PC-3 (cell line): ENCODE measurements at regions of chr7 and their contacts with region 1.

Region 1: GRCh38 chr7:7732566-7733290 is 14.3 kb upstream of the RPA3 start:
- DNase-seq: peak; percentile 42
- ATAC-seq: peak; percentile 64
- H3K4me3 ChIP-seq: no peak overlapping the region
- H3K27ac ChIP-seq: no peak overlapping the region
- H3K4me1 ChIP-seq: peaks cover 14% of the 10 kb centered on the region
- H3K27me3 ChIP-seq: no peaks in the 10 kb centered on the region
- CTCF ChIP-seq: no peak

Region 2: GRCh38 chr7:7696458-7697119 is 36.1 kb before region 1 on chr7:
- CTCF ChIA-PET with region 1: no interaction called
- POLR2A ChIA-PET with region 1: interaction called, 7 read pairs
- intact Hi-C with region 1: loop called (anchors 1 kb)
- DNase-seq: peak; percentile 58
- ATAC-seq: peak; percentile 80
- H3K4me3 ChIP-seq: peak overlapping the region; percentile 30; the same call in 1 of the 2 replicates
- H3K27ac ChIP-seq: peak overlapping the region; percentile 38; the same call in 1 of the 2 replicates
- H3K4me1 ChIP-seq: peaks cover 36% of the 10 kb centered on the region
- H3K27me3 ChIP-seq: no peaks in the 10 kb centered on the region
- CTCF ChIP-seq: no peak